ENCODE measurements at regions of chr7 and their contacts with region 1.

Region 1: GRCh38 chr7:86939197-86939814 is 120.1 kb downstream of the ELAPOR2 start:
- DNase-seq: no peak

Region 2: GRCh38 chr7:87129848-87130247 is 190.5 kb after region 1 on chr7:
- intact Hi-C with region 1: no loop called
- DNase-seq: no peak

Region 3: DNA sequence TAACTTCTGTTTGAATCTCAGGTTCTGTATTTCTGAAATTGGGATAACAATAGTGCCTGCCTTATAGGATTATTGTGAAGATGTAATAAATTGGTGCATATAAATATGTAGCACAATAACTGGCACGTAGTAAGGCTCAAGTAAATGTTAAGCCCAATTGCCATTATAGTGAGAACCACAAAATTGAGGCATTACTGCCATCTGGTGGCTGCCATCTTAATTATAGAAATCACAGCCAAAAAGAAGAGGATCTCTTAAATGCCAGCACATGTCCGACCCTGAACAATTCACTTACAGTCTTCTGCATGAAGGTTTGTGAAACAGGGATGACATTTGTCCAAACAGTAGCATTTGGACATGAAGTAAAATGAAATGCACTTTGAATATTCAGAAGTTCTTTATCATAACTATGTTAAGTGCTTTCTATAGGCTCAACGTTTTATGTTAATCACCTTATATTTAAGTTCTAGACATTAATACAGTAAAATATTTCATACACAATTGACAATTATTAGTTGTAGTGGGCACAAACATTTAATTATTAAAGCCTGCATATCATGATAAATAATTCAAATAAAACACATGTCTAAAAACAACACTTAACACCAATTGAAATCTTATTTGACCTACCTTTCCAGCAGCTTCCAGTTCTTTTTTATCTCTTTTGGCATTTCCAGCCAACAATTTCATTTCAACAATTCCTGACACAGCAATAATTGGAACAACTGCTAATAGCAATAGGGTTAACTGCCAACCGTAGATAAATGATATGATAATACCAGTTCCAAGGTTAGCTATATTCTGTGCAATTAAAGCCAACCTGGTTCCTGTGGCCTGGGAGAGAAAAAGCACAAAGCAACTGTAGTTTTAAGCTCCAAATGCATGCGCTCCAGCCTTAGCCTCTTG is 477.6 kb after region 1 on chr7:
- intact Hi-C with region 1: loop called (anchors 10 kb)
- DNase-seq: peak in 5 of 10 donors; percentile 15 to 65 (median 51)

Region 4: GRCh38 chr7:87456247-87456646 is 516.9 kb after region 1 on chr7:
- intact Hi-C with region 1: no loop called
- DNase-seq: no peak

Measured in posterior cingulate gyrus (tissue), 11 donors.